ENCODE measurements at regions of chr11 and their contacts with region 1.

Region 1: DNA sequence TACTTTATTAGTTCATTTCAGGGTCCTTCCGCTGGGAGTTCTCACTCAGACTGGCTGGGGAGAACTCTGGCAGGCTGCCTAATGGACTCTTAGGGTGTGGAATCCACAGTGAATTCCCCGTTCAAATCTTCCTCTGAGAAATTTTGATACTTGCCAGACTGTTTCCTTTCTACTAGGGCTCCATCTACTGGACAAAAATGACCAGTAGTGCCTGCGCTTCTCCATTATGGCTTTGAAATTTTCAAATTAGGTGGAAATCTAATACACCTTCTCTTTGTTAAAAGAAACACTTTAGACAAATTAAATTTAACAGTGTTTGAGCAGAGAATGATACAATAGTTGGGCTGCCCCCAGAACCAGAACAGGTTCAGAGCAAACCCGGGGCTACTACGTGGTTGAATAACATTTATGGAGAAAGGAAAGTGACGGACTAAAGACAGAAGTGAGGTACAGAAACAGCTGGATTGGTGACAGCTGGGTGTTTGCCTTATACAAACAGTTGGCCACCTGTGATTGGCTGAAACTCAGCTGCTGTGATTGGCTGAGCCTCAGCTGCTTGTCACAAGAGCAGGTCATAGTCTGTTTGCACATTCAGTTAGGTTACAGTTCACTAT is 52.9 kb upstream of the FDX1 start:
- DNase-seq: peak; percentile 47
- H3K4me3 Mint-ChIP-seq: no peak overlapping the region
- H3K27ac Mint-ChIP-seq: no peak overlapping the region
- H3K4me1 Mint-ChIP-seq: peaks cover 16% of the 10 kb centered on the region
- H3K27me3 Mint-ChIP-seq: peaks cover 6% of the 10 kb centered on the region

Region 2: GRCh38 chr11:109946322-109946846 is 430.4 kb before region 1 on chr11:
- CTCF ChIA-PET with region 1: no interaction called
- intact Hi-C with region 1: loop called (anchors 2 kb)
- DNase-seq: peak; percentile 83
- H3K4me3 Mint-ChIP-seq: peak overlapping the region; percentile 3
- H3K27ac Mint-ChIP-seq: no peak overlapping the region
- H3K4me1 Mint-ChIP-seq: peaks cover 6% of the 10 kb centered on the region
- H3K27me3 Mint-ChIP-seq: peaks cover 6% of the 10 kb centered on the region

Region 3: GRCh38 chr11:110199184-110199941 is 177.5 kb before region 1 on chr11:
- CTCF ChIA-PET with region 1: interaction called, 30 read pairs
- intact Hi-C with region 1: loop called (anchors 1 kb)
- DNase-seq: no peak
- H3K4me3 Mint-ChIP-seq: no peak overlapping the region
- H3K27ac Mint-ChIP-seq: no peak overlapping the region
- H3K4me1 Mint-ChIP-seq: no peaks in the 10 kb centered on the region
- H3K27me3 Mint-ChIP-seq: no peaks in the 10 kb centered on the region

Region 4: GRCh38 chr11:110327508-110327907 is 49.3 kb before region 1 on chr11:
- CTCF ChIA-PET with region 1: interaction called, 5 read pairs
- intact Hi-C with region 1: loop called (anchors 1 kb)
- DNase-seq: no peak
- H3K4me3 Mint-ChIP-seq: peak overlapping the region; percentile 81
- H3K27ac Mint-ChIP-seq: peak overlapping the region; percentile 65
- H3K4me1 Mint-ChIP-seq: peaks cover 18% of the 10 kb centered on the region
- H3K27me3 Mint-ChIP-seq: peaks cover under 1% of the 10 kb centered on the region

Region 5: DNA sequence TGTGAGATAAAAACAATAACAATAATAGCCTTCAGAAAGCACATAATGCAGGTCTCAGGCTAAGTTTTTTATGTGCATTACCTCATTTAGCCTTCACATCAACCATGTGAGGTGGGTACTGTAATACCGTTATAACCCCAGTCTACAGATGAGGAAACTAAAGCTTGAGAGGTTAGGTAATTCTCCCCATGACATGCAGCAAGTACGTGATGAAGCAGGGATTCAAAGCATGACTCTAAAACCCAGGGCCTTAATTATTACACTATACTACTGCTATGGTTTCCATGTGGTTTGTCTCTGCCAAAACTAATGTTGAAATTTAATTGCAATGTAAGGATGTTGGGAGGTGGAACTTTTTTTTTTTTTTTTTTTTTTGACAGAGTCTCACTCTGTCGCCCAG is 15.2 kb after region 1 on chr11:
- CTCF ChIA-PET with region 1: no interaction called
- intact Hi-C with region 1: no loop called
- DNase-seq: no peak
- H3K4me3 Mint-ChIP-seq: no peak overlapping the region
- H3K27ac Mint-ChIP-seq: no peak overlapping the region
- H3K4me1 Mint-ChIP-seq: no peaks in the 10 kb centered on the region
- H3K27me3 Mint-ChIP-seq: peaks cover 7% of the 10 kb centered on the region

Region 6: DNA sequence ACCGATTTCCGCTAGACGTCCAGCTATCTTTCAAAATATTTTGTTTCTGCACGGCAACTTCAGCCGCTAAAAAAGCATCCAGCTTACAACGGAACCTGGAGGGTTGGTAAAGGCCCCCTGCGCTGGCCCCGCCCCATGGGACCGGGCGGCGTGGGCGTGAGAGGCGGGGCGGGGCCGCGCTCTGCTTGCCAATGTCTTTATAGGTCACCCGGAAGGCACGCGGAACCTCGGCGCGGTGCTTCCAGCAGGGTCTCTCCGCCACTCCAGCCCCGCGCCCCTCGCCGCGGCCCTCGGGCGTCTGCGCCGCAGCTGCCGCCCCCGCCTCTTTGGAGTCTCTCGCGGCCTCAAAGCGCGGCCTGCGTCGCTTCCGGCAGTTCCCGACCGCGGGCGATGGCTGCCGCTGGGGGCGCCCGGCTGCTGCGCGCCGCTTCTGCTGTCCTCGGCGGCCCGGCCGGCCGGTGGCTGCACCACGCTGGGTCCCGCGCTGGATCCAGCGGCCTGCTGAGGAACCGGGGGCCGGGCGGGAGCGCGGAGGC is 53.0 kb after region 1 on chr11 and contains the start of gene FDX1:
- CTCF ChIA-PET with region 1: interaction called, 17 read pairs
- intact Hi-C with region 1: loop called (anchors 1 kb)
- DNase-seq: peak; percentile 86
- H3K4me3 Mint-ChIP-seq: peak within 1 kb of the TSS; percentile 98
- H3K27ac Mint-ChIP-seq: peak within 1 kb of the TSS; percentile 93
- H3K4me1 Mint-ChIP-seq: peaks cover 40% of the 10 kb centered on the region
- H3K27me3 Mint-ChIP-seq: no peaks in the 10 kb centered on the region
- total RNA-seq, gene FDX1: 12.3 to 13.4 TPM

Measured in activated naive CD4-positive, alpha-beta T cell treated with anti-CD3 and anti-CD28 coated beads for 36 hours (primary cell).